Caco-2 (cell line): ENCODE measurements at regions of chr6 and their contacts with region 1.

Region 1: DNA sequence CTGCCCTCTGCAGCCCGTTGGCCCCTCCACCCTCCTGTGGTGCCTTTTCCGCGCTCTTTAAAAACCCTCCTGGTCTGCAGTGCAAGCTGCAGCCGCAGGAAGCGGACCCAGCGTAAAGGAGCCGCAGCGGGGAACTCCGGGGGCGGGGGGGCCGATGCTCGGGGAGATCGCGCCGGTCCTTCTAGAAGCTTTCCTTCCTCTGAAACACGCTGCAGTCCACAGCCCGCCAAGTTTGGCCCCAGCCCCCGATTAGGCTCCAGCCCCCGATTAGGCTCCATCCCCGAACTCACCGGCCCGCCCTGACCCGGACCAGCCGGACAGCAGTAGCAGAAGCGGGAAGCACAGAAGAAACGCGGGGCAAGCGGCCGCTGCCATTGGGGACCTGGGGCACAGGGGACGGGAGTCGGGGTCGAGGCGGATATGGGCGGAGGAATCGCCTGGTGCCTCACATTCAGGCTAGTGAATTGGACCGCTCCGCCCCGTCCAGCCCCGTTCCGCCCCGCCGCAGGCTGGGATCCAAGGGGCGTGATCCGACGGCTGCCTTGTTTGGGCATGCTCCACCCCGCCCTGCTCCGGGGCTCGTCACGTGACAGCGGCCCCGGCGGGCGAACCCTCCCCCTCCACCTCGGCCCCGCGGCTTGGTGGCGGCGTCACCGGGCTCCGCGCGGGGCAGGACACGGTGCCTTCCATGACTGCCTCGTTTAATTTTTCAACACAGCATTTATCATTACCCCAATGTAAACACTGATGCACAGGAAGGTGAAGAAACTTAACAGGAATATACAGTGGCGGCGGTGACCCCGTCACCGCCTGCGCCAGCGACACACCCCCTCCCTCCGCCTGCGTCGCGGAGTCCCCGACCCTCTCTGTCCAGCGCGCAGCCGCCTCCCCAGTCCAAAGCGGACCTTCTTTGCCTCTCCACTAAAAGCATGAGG is 20.3 kb downstream of the RAET1L start:
- DNase-seq: peak; percentile 94 to 95
- H3K4me3 ChIP-seq: peak overlapping the region; percentile 82
- H3K4me3 Mint-ChIP-seq: peak overlapping the region; percentile 81
- H3K27ac Mint-ChIP-seq: peak overlapping the region; percentile 50
- H3K4me1 ChIP-seq: peaks cover 4% of the 10 kb centered on the region; the same call in 1 of the 2 replicates
- H3K4me1 Mint-ChIP-seq: peaks cover 9% of the 10 kb centered on the region
- H3K27me3 ChIP-seq: no peaks in the 10 kb centered on the region
- H3K27me3 Mint-ChIP-seq: peaks cover 11% of the 10 kb centered on the region
- CTCF ChIP-seq: no peak

Region 2: GRCh38 chr6:149648148-149649145 is 356.6 kb before region 1 on chr6 and contains the start of gene KATNA1:
- CTCF ChIA-PET with region 1: no interaction called
- POLR2A ChIA-PET with region 1: no interaction called
- intact Hi-C with region 1: loop called (anchors 1 kb)
- DNase-seq: peak; percentile 95 to 96
- H3K4me3 ChIP-seq: peak within 1 kb of the TSS; percentile 68
- H3K4me3 Mint-ChIP-seq: peak within 1 kb of the TSS; percentile 84
- H3K27ac Mint-ChIP-seq: peak within 1 kb of the TSS; percentile 73
- H3K4me1 ChIP-seq: 0 out of 2 replicates have a peak, but pooled peaks cover 10% of the 10 kb centered on the region
- H3K4me1 Mint-ChIP-seq: no peaks in the 10 kb centered on the region
- H3K27me3 ChIP-seq: no peaks in the 10 kb centered on the region
- H3K27me3 Mint-ChIP-seq: no peaks in the 10 kb centered on the region
- CTCF ChIP-seq: no peak
- total RNA-seq, gene KATNA1: 16.7 and 19.2 TPM in 2 replicates

Region 3: DNA sequence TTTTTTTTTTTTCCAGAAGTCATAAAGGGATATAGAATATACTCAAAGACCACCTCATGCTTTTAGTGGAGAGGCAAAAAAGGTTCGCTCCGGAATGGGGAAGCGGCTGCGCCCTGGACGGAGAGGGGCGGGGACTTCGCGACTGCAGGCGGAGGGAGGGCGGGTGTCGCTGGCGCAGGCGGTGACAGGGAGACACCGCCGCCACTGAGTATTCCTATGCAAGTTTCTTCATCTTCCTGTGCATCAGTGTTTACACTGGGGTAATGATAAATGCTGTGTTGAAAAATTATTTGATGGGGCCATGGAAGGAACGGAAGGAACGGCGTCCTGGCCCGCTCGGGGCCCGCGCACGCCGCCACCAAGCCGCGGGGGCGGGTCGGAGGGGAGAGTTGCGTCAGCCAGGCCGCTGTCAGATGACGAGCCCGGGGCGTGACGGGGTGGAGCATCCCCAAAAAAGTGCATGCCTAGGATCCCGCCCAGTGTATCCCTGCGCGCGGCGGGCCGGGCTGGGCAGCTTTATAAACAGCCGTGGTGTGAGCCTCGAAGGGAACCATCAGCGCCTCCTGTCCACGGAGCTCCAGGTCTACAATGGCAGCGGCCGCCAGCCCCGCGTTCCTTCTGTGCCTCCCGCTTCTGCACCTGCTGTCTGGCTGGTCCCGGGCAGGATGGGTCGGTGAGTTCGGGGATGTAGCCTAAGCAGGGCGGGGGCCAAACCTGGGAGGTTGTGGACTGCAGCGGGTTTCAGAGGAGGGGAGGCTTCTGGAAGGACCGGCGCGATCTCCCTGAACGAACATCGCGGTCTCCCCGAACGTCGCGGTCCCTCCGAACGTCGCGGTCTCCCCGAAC is 41.4 kb before region 1 on chr6 and contains the start of gene ULBP1:
- CTCF ChIA-PET with region 1: interaction called, 3 read pairs
- POLR2A ChIA-PET with region 1: no interaction called
- intact Hi-C with region 1: loop called (anchors 1 kb)
- DNase-seq: peak; percentile 81 to 87
- H3K4me3 ChIP-seq: peak within 1 kb of the TSS; percentile 40
- H3K4me3 Mint-ChIP-seq: peak within 1 kb of the TSS; percentile 83
- H3K27ac Mint-ChIP-seq: peak within 1 kb of the TSS; percentile 80
- H3K4me1 ChIP-seq: no peaks in the 10 kb centered on the region
- H3K4me1 Mint-ChIP-seq: no peaks in the 10 kb centered on the region
- H3K27me3 ChIP-seq: no peaks in the 10 kb centered on the region
- H3K27me3 Mint-ChIP-seq: peaks cover 6% of the 10 kb centered on the region
- CTCF ChIP-seq: peak in 1 of 2 experiments; percentile 15
- total RNA-seq, gene ULBP1: 5.4 and 7.7 TPM in 2 replicates